ENCODE measurements at regions of chr10 and their contacts with region 1.

Region 1: DNA sequence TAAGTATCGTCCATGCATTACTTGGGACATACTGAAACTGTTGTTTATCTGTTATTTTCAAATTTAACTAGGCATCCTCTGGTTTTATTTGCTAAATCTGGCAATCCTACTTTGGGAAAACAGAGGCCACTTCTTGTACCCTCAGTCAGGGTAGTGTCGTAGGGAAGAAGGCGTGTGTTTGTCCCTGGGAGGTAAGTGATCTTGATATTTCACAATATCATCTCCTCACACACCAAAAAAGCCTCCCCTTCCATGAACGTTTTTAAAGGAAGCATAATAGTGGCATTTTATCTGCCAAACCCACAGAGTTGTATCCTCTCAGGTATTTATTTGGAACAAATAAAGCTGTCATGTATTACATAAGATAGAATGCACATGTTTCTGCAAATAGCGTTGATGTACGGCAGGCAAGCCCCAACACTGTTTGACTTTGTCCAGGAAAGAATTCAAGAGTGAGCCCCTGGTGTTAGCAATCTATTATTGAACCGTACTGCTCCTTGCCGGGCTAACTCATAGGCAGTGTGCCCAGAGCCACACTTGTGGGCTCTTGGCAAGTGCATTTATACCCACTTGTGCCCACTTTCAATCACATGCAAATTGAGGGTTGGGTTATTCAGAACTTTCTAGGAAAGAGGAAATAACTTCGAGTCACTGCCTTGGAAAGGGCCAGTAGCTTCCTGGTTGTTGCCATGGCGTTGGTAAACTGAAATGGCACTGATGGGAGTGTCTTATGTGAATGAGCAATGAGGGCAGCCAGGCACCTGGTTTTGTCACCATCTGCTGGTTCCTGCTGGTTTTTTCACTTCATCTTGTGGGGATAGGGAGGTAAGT is 266.0 kb downstream of the USP6NL start:
- DNase-seq: peak; percentile 72
- H3K4me3 Mint-ChIP-seq: no peak overlapping the region
- H3K27ac Mint-ChIP-seq: no peak overlapping the region
- H3K4me1 Mint-ChIP-seq: peaks cover 4% of the 10 kb centered on the region
- H3K27me3 Mint-ChIP-seq: no peaks in the 10 kb centered on the region

Region 2: DNA sequence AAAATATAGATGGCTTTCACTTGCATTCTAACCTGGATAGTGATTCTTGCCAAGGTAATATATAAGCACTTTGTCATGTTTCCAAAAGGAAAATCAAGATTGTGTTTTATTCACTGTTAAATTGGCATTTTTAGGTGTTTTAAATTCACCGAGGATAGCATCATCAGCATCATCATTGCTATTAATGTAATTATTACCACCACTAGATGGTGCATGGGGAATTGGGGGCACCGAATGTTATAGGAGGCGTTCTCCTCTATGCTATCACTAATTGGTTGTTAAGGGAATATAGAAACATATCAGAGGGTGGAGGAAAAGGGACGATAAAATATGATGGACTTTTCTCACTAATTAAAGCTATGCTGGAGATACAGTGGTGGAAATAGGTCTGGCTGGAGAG is 232.3 kb before region 1 on chr10:
- CTCF ChIA-PET with region 1: no interaction called
- intact Hi-C with region 1: loop called (anchors 1 kb)
- DNase-seq: peak; percentile 41
- H3K4me3 Mint-ChIP-seq: no peak overlapping the region
- H3K27ac Mint-ChIP-seq: no peak overlapping the region
- H3K4me1 Mint-ChIP-seq: peaks cover 21% of the 10 kb centered on the region
- H3K27me3 Mint-ChIP-seq: no peaks in the 10 kb centered on the region

Region 3: GRCh38 chr10:11411926-11412545 is 66.6 kb after region 1 on chr10:
- CTCF ChIA-PET with region 1: no interaction called
- intact Hi-C with region 1: no loop called
- DNase-seq: no peak
- H3K4me3 Mint-ChIP-seq: no peak overlapping the region
- H3K27ac Mint-ChIP-seq: no peak overlapping the region
- H3K4me1 Mint-ChIP-seq: peaks cover 16% of the 10 kb centered on the region
- H3K27me3 Mint-ChIP-seq: no peaks in the 10 kb centered on the region